Caki2 (cell line): ENCODE measurements at regions of chr1 and their contacts with region 1.

Region 1: GRCh38 chr1:161399257-161399998 is 31.8 kb upstream of the CFAP126 start:
- DNase-seq: peak; percentile 90

Region 2: DNA sequence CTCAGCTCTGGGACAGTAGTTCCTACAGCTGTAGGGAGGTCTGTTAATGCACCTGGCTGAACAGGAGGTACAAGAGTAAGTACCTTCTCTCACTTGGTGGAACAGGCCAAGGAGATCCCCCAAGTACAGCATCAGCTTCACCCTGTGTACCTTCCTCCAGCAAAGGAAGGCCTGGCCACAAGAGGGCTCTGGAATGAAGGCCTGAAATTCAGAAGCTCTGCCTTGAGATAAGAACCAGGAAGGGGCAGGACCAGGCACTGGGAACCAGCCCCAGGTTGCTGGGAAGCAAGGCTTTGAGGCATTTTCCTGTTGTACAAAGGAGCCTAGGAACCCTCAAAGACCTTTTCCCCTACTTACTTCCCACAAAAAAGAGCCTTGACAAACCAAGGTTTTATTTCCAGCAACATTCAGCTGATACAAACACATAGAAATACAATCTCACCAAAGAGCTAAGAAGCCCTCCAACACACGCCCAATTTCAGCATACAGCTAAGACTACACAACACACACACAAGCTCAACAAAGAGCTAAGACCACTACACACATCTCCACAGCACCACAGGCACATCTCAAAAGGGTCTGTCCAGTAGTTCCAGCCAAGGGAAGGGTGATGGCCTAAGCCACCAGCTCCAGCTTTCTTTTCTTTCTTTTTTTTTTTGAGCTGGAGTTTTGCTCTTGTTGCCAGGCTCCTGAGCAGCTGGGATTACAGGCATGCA is 401.9 kb before region 1 on chr1:
- in situ Hi-C with region 1: no loop called
- DNase-seq: peak; percentile 35

Region 3: DNA sequence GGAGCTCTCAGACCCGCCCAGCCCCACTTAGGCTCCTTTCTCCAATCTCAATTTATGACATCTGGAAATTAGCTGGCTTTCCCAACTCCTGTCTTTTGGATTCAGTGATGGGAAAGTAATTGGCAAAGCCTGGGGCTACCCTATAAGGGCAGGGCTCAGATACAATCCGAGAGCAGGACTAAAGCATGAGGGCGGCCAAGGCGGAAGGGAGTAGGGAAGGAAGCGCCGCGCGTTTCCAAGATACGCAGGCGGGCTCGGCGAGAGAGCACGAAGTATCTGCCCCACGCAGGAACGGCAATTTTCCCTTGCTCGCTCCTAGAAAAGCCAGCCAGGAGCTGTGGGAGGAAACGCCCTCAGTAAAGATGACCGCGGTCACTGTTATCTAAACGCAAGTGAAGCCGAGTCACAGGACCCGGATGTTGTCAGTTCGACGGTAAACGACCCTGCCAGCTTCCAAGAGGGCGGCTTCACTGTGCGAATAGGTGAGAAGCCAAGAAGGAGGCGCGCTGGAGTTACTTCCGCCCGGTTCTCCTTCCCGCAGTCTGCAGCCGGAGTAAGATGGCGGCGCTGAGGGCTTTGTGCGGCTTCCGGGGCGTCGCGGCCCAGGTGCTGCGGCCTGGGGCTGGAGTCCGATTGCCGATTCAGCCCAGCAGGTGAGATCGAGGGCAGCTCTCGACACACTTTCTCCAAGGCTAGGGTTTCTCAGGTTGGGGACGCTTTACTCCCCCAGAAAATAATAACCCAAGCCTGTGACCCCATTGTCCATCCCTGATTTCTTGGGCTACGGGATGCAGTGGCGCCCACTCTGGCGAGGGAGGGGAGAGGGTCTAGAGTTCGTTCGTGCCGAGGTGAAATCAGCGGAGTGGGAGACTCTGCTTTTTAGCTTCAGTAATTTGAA is 197.4 kb before region 1 on chr1 and contains the start of gene NDUFS2:
- in situ Hi-C with region 1: loop called (anchors 25 kb)
- DNase-seq: peak; percentile 95
- total RNA-seq, gene NDUFS2: 108 and 118 TPM in 2 replicates